A549 (cell line): ENCODE measurements at regions of chr15 and their contacts with region 1.

Region 1: GRCh38 chr15:32908135-32908801 is 190.5 kb downstream of the GREM1 start:
- DNase-seq: no peak
- ATAC-seq: no peak
- H3K4me3 ChIP-seq: no peak overlapping the region
- H3K27ac ChIP-seq: no peak overlapping the region
- H3K4me1 ChIP-seq: no peaks in the 10 kb centered on the region
- CTCF ChIP-seq: no peak
- EP300 ChIP-seq: no peak
- POLR2A ChIP-seq: no peak
- RAD21 ChIP-seq: no peak

Region 2: GRCh38 chr15:32893421-32893820 is 14.8 kb before region 1 on chr15:
- CTCF ChIA-PET with region 1: interaction called, 13 read pairs
- POLR2A ChIA-PET with region 1: no interaction called
- DNase-seq: no peak
- ATAC-seq: no peak
- H3K4me3 ChIP-seq: no peak overlapping the region
- H3K27ac ChIP-seq: no peak overlapping the region
- H3K4me1 ChIP-seq: peaks cover under 1% of the 10 kb centered on the region; the same call in 2 of the 3 replicates
- CTCF ChIP-seq: no peak
- EP300 ChIP-seq: no peak
- POLR2A ChIP-seq: no peak
- RAD21 ChIP-seq: no peak